ENCODE measurements at regions of chr19 and their contacts with region 1.

Region 1: DNA sequence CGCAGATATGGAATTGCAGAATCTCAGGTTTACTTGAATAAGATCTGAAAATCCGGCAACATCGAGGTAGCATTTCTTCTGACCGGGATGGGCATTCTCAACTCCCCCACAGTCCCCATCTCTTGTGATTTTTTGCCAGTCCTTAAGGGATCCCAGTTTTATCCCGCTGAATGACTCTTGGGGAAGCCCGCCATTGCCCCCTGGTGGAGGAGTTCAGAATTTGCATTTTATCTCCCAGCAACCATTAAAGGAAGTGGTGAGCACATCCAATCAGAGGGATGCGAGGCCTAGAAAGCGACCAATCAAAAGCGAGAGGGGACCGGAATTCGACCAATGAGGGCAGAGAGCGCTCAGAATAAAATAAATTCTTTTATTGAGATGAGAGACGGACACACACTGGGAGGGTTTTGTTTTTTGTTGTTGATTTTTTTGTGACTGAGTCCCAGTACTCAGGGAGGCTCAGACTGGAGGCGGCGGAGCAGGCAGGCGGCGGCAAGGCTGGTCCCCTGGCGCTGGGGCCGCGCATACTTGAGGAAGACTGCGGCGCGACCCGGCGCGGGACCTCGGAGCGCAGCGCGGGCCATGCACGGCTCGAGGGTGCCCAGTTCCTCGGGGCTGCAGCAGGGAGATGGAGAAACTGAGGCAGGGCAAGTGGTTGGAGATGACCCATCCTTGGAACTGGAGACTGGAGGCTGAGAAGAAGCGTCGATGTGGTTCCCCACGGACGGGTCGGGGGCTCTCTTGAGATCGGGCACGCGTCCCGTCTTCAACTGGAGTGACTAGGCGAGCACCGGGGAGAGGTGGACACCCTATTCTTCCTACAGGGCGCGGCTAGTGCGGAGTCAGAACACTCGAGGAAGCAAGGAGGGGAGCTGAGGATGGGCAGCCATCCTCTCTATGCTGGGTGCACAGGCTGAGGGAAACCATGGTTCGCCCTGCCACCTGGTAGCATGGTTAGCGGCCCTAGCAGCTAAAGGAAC is 4.0 kb upstream of the TTC9B start:
- DNase-seq: peak; percentile 83 to 88
- H3K4me3 ChIP-seq: no peak overlapping the region
- H3K4me3 Mint-ChIP-seq: peak overlapping the region; percentile 9
- H3K27ac Mint-ChIP-seq: no peak overlapping the region
- H3K4me1 ChIP-seq: peaks cover 14% of the 10 kb centered on the region; the same call in 1 of the 2 replicates
- H3K4me1 Mint-ChIP-seq: peaks cover 17% of the 10 kb centered on the region
- H3K27me3 ChIP-seq: no peaks in the 10 kb centered on the region
- H3K27me3 Mint-ChIP-seq: peaks cover 10% of the 10 kb centered on the region
- CTCF ChIP-seq: peak; percentile 78 to 91

Region 2: DNA sequence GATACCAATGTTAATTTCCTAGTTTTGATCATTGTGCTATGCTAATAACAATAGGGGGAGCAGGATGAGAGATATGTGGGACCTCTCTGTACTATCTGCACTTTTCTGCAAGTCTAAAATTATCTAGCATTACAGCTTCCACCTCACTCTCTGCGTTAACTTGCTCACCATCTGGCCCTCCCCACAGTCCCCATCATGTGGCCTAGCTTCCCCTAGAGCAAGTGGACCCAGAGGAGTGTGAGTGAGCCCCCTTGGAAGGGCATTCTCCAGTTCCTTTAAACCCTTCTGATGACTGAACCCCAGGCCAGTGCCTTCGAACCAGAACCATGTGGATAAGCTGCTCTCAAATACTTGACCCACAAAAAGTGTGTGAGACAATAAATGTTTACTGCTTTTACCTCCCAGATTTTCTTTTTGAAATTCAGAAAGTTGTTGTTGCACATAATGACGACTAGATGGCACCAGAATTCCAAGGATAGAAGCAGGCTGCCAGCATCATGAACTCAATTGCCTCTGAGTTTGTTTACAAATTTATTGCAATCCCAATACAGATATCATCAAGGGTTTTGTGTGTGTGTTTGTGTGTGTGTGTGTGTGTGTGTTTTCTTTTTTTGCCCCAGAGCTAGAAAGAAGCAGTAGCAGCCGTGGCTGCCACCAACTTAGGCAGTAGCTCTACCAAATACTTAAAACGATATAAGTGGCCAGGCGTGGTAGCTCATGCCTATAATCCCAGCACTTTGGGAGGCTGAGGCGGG is 82.4 kb before region 1 on chr19:
- CTCF ChIA-PET with region 1: interaction called, 4 read pairs
- POLR2A ChIA-PET with region 1: no interaction called
- intact Hi-C with region 1: loop called (anchors 1 kb)
- DNase-seq: peak in 1 of 2 experiments; percentile 42
- H3K4me3 ChIP-seq: no peak overlapping the region
- H3K4me3 Mint-ChIP-seq: no peak overlapping the region
- H3K27ac Mint-ChIP-seq: no peak overlapping the region
- H3K4me1 ChIP-seq: no peaks in the 10 kb centered on the region
- H3K4me1 Mint-ChIP-seq: no peaks in the 10 kb centered on the region
- H3K27me3 ChIP-seq: no peaks in the 10 kb centered on the region
- H3K27me3 Mint-ChIP-seq: peaks cover 16% of the 10 kb centered on the region
- CTCF ChIP-seq: peak; percentile 61 to 82

Region 3: GRCh38 chr19:40155749-40156265 is 66.3 kb before region 1 on chr19:
- CTCF ChIA-PET with region 1: interaction called, 3 read pairs
- POLR2A ChIA-PET with region 1: no interaction called
- intact Hi-C with region 1: loop called (anchors 5 kb)
- DNase-seq: peak in 1 of 2 experiments; percentile 42
- H3K4me3 ChIP-seq: no peak overlapping the region
- H3K4me3 Mint-ChIP-seq: no peak overlapping the region
- H3K27ac Mint-ChIP-seq: no peak overlapping the region
- H3K4me1 ChIP-seq: no peaks in the 10 kb centered on the region
- H3K4me1 Mint-ChIP-seq: no peaks in the 10 kb centered on the region
- H3K27me3 ChIP-seq: no peaks in the 10 kb centered on the region
- H3K27me3 Mint-ChIP-seq: no peaks in the 10 kb centered on the region
- CTCF ChIP-seq: peak; percentile 32 to 38

Measured in Caco-2 (cell line).